Activated T-helper 2 cell treated with anti-CD3 and anti-CD28 coated beads, Interferon-gamma antibody, Interleukin-2, Interleukin-4, amounts not matched to agents 10 μg/mL and 5 μg/mL and 100 μg/mL, durations not matched to agents 14 hours and 24 hours and 36 hours (primary cell): ENCODE measurements at regions of chr15 and their contacts with region 1.

Region 1: GRCh38 chr15:72155635-72156616 is 37.7 kb downstream of the SENP8 start:
- DNase-seq: peak; percentile 69
- H3K4me3 Mint-ChIP-seq: peak overlapping the region; percentile 71
- H3K27ac Mint-ChIP-seq: no peak overlapping the region
- H3K4me1 Mint-ChIP-seq: peaks cover 2% of the 10 kb centered on the region
- H3K27me3 Mint-ChIP-seq: peaks cover 3% of the 10 kb centered on the region

Region 2: DNA sequence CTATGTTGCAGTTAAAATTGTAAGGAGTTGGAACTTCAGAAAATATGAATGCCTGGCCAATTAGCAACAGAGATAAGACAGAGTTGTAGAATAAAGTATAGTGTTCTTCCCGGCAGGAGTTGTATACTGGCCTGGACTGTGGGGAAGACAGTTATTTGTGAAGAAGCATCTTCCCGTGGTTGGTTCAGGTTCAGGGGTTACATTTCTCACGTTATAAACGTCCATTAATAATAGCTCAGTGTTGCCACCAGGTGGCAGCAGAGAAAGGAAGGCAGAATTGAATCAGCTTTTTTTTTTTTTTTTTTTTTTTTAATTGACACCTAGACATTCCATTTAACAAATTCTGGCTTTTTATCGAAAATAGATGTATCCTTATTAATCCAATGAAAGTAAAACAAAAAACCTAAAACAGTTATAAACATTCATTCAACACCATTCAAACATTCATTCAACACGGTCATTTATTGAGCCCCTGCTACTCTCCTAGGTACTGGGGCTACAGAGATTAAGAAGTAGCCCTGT is 412.0 kb before region 1 on chr15:
- intact Hi-C with region 1: loop called (anchors 1 kb)
- DNase-seq: peak; percentile 17
- H3K4me3 Mint-ChIP-seq: no peak overlapping the region
- H3K27ac Mint-ChIP-seq: no peak overlapping the region
- H3K4me1 Mint-ChIP-seq: no peaks in the 10 kb centered on the region
- H3K27me3 Mint-ChIP-seq: peaks cover 4% of the 10 kb centered on the region

Region 3: GRCh38 chr15:71780115-71780976 is 375.6 kb before region 1 on chr15:
- intact Hi-C with region 1: loop called (anchors 5 kb)
- DNase-seq: peak; percentile 23
- H3K4me3 Mint-ChIP-seq: peak overlapping the region; percentile 1
- H3K27ac Mint-ChIP-seq: peak overlapping the region; percentile 70
- H3K4me1 Mint-ChIP-seq: peaks cover 18% of the 10 kb centered on the region
- H3K27me3 Mint-ChIP-seq: no peaks in the 10 kb centered on the region